Naive thymus-derived CD8-positive, alpha-beta T cell (primary cell): ENCODE measurements at regions of chr10 and their contacts with region 1.

Region 1: DNA sequence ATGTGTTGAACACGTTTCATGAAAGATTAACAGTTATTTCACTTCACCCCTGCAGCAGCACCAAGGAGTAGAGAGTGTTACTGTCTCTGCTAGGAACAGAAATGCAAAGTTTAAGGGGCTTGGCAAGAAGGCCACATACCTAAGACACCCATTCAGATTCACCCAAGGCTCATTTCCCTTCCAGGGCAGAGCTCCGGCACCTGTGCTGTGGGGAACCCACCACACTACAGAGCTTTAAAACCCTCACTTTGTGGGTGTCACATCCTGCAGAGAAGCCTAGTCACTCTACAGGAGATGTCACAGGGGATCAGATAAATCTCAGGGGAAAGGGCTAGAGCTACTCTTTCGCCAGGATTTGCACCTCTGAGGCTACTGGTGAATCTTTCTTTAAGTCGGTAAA is 176.1 kb upstream of the KLF6 start:
- DNase-seq: peak in 8 of 10 donors; percentile 28 to 73 (median 62)
- ATAC-seq: peak; percentile 99 to 100
- H3K4me3 Mint-ChIP-seq: peak overlapping the region in 9 of 10 donors; percentile 15 to 59 (median 52)
- H3K27ac Mint-ChIP-seq: peak overlapping the region; percentile 32 to 88 (median 72)
- H3K4me1 Mint-ChIP-seq: peaks cover 14 to 34% (median 25%) of the 10 kb centered on the region in 4 donors
- H3K27me3 Mint-ChIP-seq: no peaks in the 10 kb centered on the region

Region 2: DNA sequence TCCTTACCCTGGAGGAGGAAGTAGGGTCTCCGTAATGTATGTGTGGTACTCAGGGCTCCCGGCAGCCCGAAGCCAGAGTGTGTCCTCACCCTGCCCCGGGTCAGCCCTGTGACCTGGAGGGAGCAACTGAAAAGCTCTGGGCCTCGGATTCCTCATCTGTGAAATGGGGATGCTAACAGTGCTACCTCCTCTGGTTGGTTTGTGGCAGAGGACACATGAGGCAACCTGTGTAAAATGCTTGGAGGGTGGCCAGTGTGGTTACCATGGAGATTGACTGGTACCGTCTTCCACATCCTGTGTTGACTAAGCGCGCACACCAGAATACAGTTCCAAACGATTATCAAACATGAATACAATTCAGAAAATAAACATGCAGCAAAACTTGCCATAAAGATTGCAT is 12.2 kb before region 1 on chr10:
- POLR2A ChIA-PET with region 1: interaction called, 11 read pairs
- DNase-seq: peak in 9 of 10 donors; percentile 31 to 94 (median 77)
- ATAC-seq: peak; percentile 87 to 96
- H3K4me3 Mint-ChIP-seq: peak overlapping the region; percentile 34 to 73 (median 58)
- H3K27ac Mint-ChIP-seq: peak overlapping the region; percentile 60 to 92 (median 81)
- H3K4me1 Mint-ChIP-seq: peaks cover 21 to 62% (median 55%) of the 10 kb centered on the region in 4 donors
- H3K27me3 Mint-ChIP-seq: peaks cover 0 to 2% (median 0%) of the 10 kb centered on the region in 5 donors

Region 3: DNA sequence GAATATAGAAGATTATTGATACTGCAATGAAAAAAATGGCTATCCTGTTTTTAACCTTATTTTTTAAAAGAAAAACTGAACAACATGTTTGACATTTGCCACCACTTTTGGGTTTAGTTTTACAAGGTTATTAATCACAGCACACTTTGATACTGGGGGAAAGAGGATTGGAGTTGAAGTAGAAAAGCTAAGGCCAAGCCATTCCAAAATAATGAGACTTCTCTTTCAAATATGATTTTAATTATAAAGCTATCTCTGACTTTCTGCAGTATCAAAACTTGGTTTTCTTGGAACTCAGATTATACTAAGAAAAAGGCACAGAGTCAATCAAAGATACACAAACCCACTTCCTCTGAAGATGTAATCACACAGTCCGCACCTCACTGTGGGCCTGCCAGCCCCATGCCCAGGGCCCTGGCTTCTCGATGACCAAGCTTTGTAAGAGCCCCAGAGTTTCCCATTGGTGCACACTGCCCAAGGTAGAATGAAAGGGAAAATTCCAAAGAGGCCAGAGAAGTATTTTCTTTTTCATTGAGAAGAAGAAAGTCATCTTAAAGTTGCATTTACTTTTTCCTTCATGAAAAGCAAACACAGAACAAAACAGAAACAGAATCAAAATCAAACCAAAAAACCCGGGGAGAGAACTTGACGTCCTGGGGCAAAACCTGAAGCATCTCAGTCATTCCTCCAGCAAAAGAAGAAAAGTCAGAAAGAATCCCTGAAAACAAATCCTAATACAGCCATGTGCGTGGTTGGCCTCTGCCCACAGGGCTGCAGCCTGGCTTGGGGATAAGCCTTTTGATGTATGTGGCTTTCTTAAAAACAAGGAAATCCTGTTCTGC is 11.6 kb after region 1 on chr10:
- POLR2A ChIA-PET with region 1: interaction called, 23 read pairs
- DNase-seq: peak in 2 of 10 donors; percentile 20 to 35
- ATAC-seq: peak; percentile 86 to 87
- H3K4me3 Mint-ChIP-seq: peak overlapping the region; percentile 60 to 87 (median 80)
- H3K27ac Mint-ChIP-seq: peak overlapping the region; percentile 78 to 98 (median 94)
- H3K4me1 Mint-ChIP-seq: peaks cover 23 to 50% (median 42%) of the 10 kb centered on the region in 4 donors
- H3K27me3 Mint-ChIP-seq: no peaks in the 10 kb centered on the region